ENCODE measurements at regions of chr17 and their contacts with region 1.

Region 1: GRCh38 chr17:28644985-28645939 is at the start of gene BLTP2:
- DNase-seq: peak; percentile 98 to 99 (median 99)
- ATAC-seq: peak; percentile 97
- H3K4me3 ChIP-seq: peak within 1 kb of the TSS; percentile 83
- H3K27ac ChIP-seq: peak within 1 kb of the TSS; percentile 85
- H3K4me1 ChIP-seq: peaks cover 16 to 23% of the 10 kb centered on the region in 2 experiments
- H3K27me3 ChIP-seq: no peaks in the 10 kb centered on the region
- CTCF ChIP-seq: no peak
- EP300 ChIP-seq: no peak
- POLR2A ChIP-seq: peak; percentile 89
- RAD21 ChIP-seq: no peak
- polyA plus RNA-seq, gene BLTP2: 14.7 to 34.3 TPM

Region 2: DNA sequence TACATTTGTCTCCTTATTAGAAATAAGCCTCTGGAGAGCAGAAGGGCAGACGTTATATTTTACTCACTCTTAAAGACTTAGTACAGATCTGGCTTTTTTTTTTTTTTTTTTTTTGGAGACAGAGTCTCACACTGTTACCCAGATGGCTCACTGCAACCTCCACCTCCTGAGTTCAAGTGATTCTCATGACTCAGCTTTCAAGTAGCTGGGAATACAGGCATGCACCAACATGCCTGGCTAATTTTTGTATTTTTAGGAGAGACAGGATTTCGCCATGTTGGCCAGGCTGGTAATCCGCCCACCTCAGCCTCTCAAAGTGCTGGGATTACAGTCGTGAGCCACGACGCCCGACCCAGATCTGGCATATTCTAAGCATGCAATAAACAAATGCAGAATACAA is 362.7 kb before region 1 on chr17:
- CTCF ChIA-PET with region 1: no interaction called
- POLR2A ChIA-PET with region 1: no interaction called
- in situ Hi-C with region 1: no loop called
- intact Hi-C with region 1: no loop called
- DNase-seq: no peak
- ATAC-seq: no peak
- H3K4me3 ChIP-seq: no peak overlapping the region
- H3K27ac ChIP-seq: no peak overlapping the region
- H3K4me1 ChIP-seq: peaks cover 0 to 2% of the 10 kb centered on the region in 2 experiments; a peak in 1 of 5 replicates
- H3K27me3 ChIP-seq: no peaks in the 10 kb centered on the region
- CTCF ChIP-seq: no peak
- EP300 ChIP-seq: no peak
- POLR2A ChIP-seq: no peak
- RAD21 ChIP-seq: no peak

Region 3: DNA sequence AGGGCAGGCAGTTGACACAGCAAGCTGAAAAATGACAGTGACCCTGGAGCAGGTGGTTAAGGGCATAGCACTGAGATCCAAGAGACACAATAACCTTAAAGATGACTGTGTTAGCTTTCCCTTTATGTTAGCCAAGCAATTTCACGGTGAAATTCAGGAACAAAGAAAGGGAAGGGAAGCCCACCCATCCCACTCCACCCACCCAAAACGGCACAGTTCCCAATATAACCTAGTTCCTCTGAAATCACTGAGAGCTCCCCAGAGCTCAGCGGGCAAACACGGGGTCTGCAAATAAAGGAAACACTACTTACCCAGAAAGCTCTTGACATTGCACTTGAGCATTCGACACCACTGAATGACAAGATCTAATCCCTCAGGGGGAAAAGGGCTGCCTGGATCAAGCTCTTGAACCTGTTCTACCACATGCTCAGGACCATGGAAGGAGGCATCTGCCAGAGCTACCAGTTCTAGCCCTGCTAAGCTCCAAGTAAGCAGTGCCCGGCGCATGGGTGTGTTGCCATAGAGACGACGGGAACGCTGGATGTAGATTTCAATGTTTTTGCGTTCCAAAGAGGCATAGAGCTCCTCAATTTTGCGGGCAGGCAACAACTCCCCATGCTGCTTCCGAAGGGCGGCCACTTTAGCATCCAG is 10.9 kb before region 1 on chr17:
- CTCF ChIA-PET with region 1: no interaction called
- POLR2A ChIA-PET with region 1: interaction called, 51 read pairs
- in situ Hi-C with region 1: no loop called
- intact Hi-C with region 1: no loop called
- DNase-seq: no peak
- ATAC-seq: no peak
- H3K4me3 ChIP-seq: no peak overlapping the region
- H3K27ac ChIP-seq: no peak overlapping the region
- H3K4me1 ChIP-seq: no peaks in the 10 kb centered on the region; a peak in 1 of 5 replicates
- H3K27me3 ChIP-seq: no peaks in the 10 kb centered on the region
- CTCF ChIP-seq: no peak
- EP300 ChIP-seq: no peak
- POLR2A ChIP-seq: no peak
- RAD21 ChIP-seq: no peak

Region 4: DNA sequence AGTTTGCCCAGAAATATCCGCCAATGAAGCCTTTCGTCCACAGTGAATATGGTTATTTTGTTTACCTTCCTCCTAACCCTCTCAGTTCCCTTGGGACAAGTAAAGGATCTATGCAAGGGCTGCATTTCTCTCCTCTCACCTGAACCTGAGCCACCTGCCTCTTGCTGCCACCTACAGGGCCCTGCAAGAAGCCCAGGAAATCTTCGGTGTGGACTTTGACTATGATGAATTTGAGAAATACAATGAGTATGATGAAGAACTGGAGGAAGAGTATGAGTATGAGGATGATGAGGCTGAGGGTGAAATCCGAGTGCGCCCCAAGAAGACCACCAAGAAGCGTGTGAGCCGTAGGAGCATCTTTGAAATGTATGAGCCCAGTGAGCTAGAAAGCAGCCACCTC is 30.7 kb after region 1 on chr17:
- CTCF ChIA-PET with region 1: interaction called, 15 read pairs
- POLR2A ChIA-PET with region 1: interaction called, 14 read pairs
- in situ Hi-C with region 1: no loop called
- intact Hi-C with region 1: loop called (anchors 5 kb)
- DNase-seq: peak in 1 of 4 experiments; percentile 25
- ATAC-seq: peak; percentile 75
- H3K4me3 ChIP-seq: no peak overlapping the region
- H3K27ac ChIP-seq: no peak overlapping the region
- H3K4me1 ChIP-seq: no peaks in the 10 kb centered on the region
- H3K27me3 ChIP-seq: no peaks in the 10 kb centered on the region
- CTCF ChIP-seq: peak; percentile 57 to 69 (median 60)
- EP300 ChIP-seq: no peak
- POLR2A ChIP-seq: no peak
- RAD21 ChIP-seq: peak in 1 of 2 experiments; percentile 46; a peak in 2 of 4 replicates

Region 5: DNA sequence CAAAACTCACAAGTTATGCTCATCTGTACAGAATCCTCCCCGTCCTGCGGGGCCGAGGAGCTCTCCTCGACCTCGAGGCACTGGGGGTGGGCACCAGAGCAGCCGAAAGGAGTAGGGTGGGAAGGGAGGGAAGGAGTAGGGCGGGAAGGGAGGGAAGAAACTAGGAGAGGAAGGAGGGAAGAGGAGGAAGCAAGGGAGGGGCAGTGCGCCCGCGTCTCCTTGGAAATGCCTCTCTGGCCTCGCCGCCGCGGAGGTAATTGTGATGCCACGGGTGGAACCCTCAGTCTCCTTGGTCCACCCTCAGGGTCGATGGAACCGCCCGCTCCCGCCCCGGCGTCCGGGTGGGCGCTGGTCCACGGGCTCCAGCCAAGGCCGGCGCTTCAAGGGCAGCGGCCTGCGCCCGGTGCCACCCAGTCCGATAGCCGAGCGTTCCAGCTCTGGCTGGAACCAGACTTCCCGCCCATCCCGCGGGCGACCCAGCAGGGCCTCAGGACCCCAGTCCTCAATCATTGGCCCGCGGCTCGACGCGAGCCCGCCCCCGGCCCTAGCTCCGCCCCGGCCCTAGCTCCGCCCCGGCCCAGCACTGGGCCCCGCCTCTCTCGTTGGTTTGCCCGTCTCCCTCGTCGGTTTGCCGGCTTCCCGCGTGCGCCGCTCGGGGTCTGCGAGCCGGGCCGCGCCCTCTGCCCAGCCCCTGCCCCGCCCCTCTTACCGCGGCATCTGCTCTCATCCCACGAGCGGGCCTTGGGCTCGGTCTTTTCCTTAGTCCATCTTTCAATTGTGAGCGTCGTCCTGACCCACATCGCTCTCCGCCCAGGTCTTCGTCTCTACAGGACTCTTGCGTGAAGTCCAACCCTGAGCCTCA is 65.8 kb after region 1 on chr17:
- CTCF ChIA-PET with region 1: no interaction called
- POLR2A ChIA-PET with region 1: interaction called, 10 read pairs
- in situ Hi-C with region 1: no loop called
- intact Hi-C with region 1: loop called (anchors 2 kb)
- DNase-seq: peak; percentile 96 to 98 (median 98)
- ATAC-seq: peak; percentile 93
- H3K4me3 ChIP-seq: peak overlapping the region; percentile 71
- H3K27ac ChIP-seq: peak overlapping the region; percentile 88
- H3K4me1 ChIP-seq: peaks cover 16 to 34% of the 10 kb centered on the region in 2 experiments
- H3K27me3 ChIP-seq: 0 out of 5 replicates have a peak, but pooled peaks cover 0 to 11% of the 10 kb centered on the region in 2 experiments
- CTCF ChIP-seq: no peak
- EP300 ChIP-seq: no peak
- POLR2A ChIP-seq: peak; percentile 92
- RAD21 ChIP-seq: no peak

Region 6: GRCh38 chr17:28743225-28744103 is 98.2 kb after region 1 on chr17 and contains the start of gene TRAF4:
- CTCF ChIA-PET with region 1: no interaction called
- POLR2A ChIA-PET with region 1: interaction called, 4 read pairs
- in situ Hi-C with region 1: no loop called
- intact Hi-C with region 1: loop called (anchors 5 kb)
- DNase-seq: peak; percentile 90 to 95 (median 93)
- ATAC-seq: peak; percentile 87
- H3K4me3 ChIP-seq: peak within 1 kb of the TSS; percentile 87
- H3K27ac ChIP-seq: peak within 1 kb of the TSS; percentile 96
- H3K4me1 ChIP-seq: peaks cover 43 to 81% of the 10 kb centered on the region in 2 experiments
- H3K27me3 ChIP-seq: no peaks in the 10 kb centered on the region
- CTCF ChIP-seq: peak in 2 of 3 experiments; percentile 41 to 63; a peak in 4 of 6 replicates
- EP300 ChIP-seq: peak; percentile 17; the same call in 1 of the 2 replicates
- POLR2A ChIP-seq: peak; percentile 50; the same call in 1 of the 2 replicates
- RAD21 ChIP-seq: peak in 1 of 2 experiments; percentile 49; a peak in 3 of 4 replicates
- polyA plus RNA-seq, gene TRAF4: 2.4 to 5.0 TPM

Region 7: DNA sequence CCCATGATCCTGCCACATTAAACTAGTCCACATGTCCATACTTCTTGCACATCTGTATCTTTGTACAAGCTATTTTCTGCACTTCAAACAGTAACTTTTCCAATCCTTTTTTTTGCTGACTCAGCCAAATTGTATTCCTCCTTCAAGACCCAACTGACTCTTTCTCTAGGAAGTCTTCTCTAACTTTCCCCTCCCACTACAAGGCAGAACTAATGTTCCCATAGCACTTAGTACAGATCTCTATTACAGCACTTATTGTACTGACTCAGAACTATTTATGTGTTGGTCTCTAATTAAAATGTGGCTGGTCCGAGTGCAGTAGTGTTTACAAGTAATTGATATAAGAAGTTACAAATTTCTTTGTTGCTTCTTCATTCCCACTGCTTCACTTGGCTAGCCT is 189.2 kb after region 1 on chr17:
- CTCF ChIA-PET with region 1: no interaction called
- POLR2A ChIA-PET with region 1: no interaction called
- in situ Hi-C with region 1: no loop called
- intact Hi-C with region 1: no loop called
- DNase-seq: peak in 1 of 4 experiments; percentile 12
- ATAC-seq: no peak
- H3K4me3 ChIP-seq: no peak overlapping the region
- H3K27ac ChIP-seq: no peak overlapping the region
- H3K4me1 ChIP-seq: peaks cover 8 to 16% of the 10 kb centered on the region in 2 experiments
- H3K27me3 ChIP-seq: no peaks in the 10 kb centered on the region
- CTCF ChIP-seq: no peak
- EP300 ChIP-seq: no peak
- POLR2A ChIP-seq: no peak
- RAD21 ChIP-seq: no peak

Region 8: DNA sequence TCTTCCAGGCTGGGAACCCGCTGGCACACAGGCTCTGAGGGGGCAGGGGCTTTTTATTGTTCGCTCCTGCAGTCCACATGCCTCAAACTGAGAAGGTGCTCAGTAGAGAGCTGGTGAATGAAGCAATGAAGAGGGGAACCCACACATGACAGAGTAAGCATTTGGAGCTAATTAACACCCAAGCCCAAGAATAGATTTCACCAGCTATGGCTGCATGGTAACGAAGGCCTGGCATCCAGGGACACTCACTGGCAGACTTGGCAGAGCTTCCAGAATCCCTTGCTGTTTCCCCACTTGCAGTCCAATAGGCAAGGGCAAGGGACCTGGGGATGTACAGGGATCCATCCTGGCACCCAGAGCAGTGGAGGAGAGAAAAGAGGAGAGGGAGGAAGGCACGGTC is 240.1 kb after region 1 on chr17:
- CTCF ChIA-PET with region 1: no interaction called
- POLR2A ChIA-PET with region 1: no interaction called
- in situ Hi-C with region 1: no loop called
- intact Hi-C with region 1: no loop called
- DNase-seq: no peak
- ATAC-seq: no peak
- H3K4me3 ChIP-seq: no peak overlapping the region
- H3K27ac ChIP-seq: no peak overlapping the region
- H3K4me1 ChIP-seq: peaks cover 4 to 42% of the 10 kb centered on the region in 2 experiments; a peak in 4 of 5 replicates
- H3K27me3 ChIP-seq: no peaks in the 10 kb centered on the region
- CTCF ChIP-seq: no peak
- EP300 ChIP-seq: no peak
- POLR2A ChIP-seq: no peak
- RAD21 ChIP-seq: no peak

Region 9: GRCh38 chr17:28896884-28897768 is 251.9 kb after region 1 on chr17 and contains the start of gene FLOT2:
- CTCF ChIA-PET with region 1: no interaction called
- POLR2A ChIA-PET with region 1: interaction called, 6 read pairs
- in situ Hi-C with region 1: no loop called
- intact Hi-C with region 1: loop called (anchors 5 kb)
- DNase-seq: peak; percentile 84 to 88 (median 86)
- ATAC-seq: peak; percentile 88
- H3K4me3 ChIP-seq: peak within 1 kb of the TSS; percentile 95
- H3K27ac ChIP-seq: peak within 1 kb of the TSS; percentile 91
- H3K4me1 ChIP-seq: peaks cover 38 to 48% of the 10 kb centered on the region in 2 experiments
- H3K27me3 ChIP-seq: no peaks in the 10 kb centered on the region
- CTCF ChIP-seq: peak in 2 of 3 experiments; percentile 32 to 66; a peak in 5 of 6 replicates
- EP300 ChIP-seq: no peak
- POLR2A ChIP-seq: peak; percentile 85
- RAD21 ChIP-seq: peak; percentile 5 to 31
- polyA plus RNA-seq, gene FLOT2: 17.5 to 30.1 TPM

Measured in K562 (cell line).